CD4-positive, alpha-beta memory T cell (primary cell): ENCODE measurements at regions of chr7 and their contacts with region 1.

Region 1: DNA sequence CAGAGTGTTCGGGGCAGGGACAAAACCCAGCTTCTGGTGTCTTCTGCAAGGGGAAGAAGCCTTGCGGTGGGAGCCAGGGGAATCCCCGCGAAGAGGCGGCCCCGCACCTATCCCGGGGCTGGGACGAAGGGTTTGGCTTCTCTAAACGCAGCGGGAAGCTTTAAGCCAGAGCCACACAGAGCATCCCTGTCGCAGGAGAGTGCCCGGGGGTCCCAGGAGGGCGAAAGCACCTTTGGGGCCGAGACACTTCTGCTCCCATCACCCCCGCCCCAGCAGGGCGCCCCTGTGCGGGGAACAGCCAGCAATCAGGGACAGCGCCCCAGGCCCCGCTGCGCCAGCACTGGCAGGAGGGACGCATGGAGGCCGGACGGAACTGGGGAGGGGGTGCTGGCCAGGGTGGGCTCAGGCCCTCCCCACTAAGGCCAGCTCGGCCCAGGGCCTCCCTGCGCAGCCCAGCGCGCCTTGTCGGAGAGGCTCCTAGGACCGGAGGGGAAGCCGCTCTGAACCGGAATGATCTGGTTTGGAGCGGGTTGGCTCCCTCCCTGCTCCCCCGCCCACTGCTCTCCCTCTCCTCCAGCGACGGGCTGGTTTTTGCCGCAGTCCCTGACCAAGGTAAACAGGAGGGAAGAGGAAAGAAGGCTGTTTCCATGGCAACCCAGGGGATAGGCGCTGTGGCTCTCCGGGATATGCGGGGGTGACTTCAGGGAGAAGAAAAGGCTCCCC is 63.9 kb downstream of the TMEM209 start:
- DNase-seq: peak; percentile 37 to 60 (median 44)
- H3K4me3 ChIP-seq: peak overlapping the region; percentile 22 to 58
- H3K4me3 Mint-ChIP-seq: peak overlapping the region; percentile 68 to 83 (median 81)
- H3K27ac ChIP-seq: peak overlapping the region; percentile 41
- H3K27ac Mint-ChIP-seq: peak overlapping the region; percentile 29 to 90 (median 79)
- H3K4me1 ChIP-seq: peaks cover 24% of the 10 kb centered on the region
- H3K4me1 Mint-ChIP-seq: peaks cover 9 to 19% (median 13%) of the 10 kb centered on the region in 4 donors
- H3K27me3 ChIP-seq: no peaks in the 10 kb centered on the region
- H3K27me3 Mint-ChIP-seq: no peaks in the 10 kb centered on the region

Region 2: DNA sequence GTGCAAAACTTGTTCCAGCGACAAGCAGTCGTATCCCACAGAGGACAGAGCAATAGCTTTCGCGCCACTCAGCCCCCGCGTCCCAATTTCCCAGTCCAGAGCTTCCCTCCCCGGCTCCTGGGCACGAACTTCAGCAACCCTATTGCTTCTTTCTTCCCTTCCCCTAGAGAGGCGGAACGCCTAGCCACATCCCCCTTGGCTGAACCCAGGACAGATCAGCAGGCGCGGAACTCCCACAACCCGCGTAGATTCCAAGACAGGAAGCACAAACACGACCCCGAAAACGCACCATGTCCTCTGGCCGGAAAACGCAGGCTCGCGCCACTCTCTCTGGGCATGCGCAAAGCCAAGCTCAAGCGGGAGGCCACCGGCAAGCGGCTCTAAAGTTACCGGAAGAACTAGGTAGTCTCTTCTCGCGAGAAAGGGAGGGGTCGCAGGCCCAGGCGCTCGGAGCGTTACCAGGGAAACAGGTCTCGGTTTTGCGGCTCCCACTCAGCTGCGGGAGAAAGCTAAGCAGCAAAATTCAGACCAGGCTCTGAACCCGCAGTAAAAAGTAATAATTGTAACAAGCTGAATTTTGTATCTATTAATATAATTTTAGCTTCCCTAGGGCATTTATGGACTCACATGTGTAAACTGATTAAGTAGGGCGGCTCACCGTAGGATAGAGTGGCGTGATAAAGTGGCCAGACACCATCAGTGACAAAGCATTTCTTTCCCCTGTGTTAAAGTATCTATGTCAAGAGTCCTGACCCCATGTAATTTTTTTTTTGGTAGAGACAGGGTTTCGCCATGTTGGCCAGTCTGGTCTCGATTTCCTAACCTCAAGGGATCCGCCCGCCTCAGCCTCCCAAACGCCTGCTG is 64.0 kb after region 1 on chr7 and contains the start of gene TMEM209:
- CTCF ChIA-PET with region 1: no interaction called
- POLR2A ChIA-PET with region 1: interaction called, 12 read pairs
- intact Hi-C with region 1: no loop called
- DNase-seq: peak; percentile 94 to 95 (median 94)
- H3K4me3 ChIP-seq: peak within 1 kb of the TSS; percentile 82 to 91
- H3K4me3 Mint-ChIP-seq: peak within 1 kb of the TSS; percentile 98 to 100 (median 100)
- H3K27ac ChIP-seq: peak within 1 kb of the TSS; percentile 90
- H3K27ac Mint-ChIP-seq: peak within 1 kb of the TSS; percentile 93 to 100 (median 99)
- H3K4me1 ChIP-seq: peaks cover 14% of the 10 kb centered on the region
- H3K4me1 Mint-ChIP-seq: peaks cover 17 to 39% (median 27%) of the 10 kb centered on the region in 4 donors
- H3K27me3 ChIP-seq: no peaks in the 10 kb centered on the region
- H3K27me3 Mint-ChIP-seq: no peaks in the 10 kb centered on the region
- total RNA-seq, gene TMEM209: 34.5 to 38.0 TPM

Region 3: DNA sequence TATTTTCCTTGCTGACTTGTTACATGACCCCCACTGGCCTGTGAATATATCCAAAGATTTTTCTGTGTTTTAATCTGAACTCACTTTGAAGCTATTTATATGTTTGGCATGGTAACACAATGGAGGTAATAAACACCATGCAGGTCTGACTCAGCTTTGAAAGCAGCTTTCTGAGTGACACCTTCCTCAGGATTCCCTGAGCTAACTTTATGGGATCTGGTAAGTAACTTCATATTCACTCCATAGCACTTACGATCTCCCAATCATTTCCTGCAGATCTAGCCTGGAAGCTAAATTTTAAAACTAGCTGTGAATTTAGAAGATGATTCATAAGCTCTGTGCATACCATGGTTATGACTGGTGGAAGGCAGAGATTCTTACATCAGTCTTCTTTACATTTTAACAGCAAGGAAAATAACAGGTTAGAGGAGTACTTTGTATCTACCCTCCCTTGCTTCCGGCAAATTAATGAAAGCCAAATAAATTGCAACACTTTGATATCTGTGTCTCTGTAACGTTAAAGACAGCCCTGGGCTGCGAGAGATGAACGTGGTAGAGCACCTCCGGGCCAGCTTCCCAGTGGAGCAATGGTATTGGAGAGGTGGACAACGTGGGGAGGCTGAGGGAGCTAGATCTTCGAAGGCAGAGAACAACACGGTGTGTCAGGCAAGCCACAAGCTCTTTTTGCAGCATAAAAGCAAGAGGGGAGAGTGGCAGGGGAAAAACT is 762.9 kb after region 1 on chr7:
- CTCF ChIA-PET with region 1: no interaction called
- POLR2A ChIA-PET with region 1: no interaction called
- intact Hi-C with region 1: no loop called
- DNase-seq: no peak
- H3K4me3 ChIP-seq: no peak overlapping the region
- H3K4me3 Mint-ChIP-seq: peak overlapping the region in 7 of 8 donors; percentile 18 to 85 (median 41)
- H3K27ac ChIP-seq: peak overlapping the region; percentile 52
- H3K27ac Mint-ChIP-seq: peak overlapping the region; percentile 70 to 95 (median 91)
- H3K4me1 ChIP-seq: peaks cover 89% of the 10 kb centered on the region
- H3K4me1 Mint-ChIP-seq: peaks cover 59 to 94% (median 72%) of the 10 kb centered on the region in 4 donors
- H3K27me3 ChIP-seq: no peaks in the 10 kb centered on the region
- H3K27me3 Mint-ChIP-seq: no peaks in the 10 kb centered on the region